Activated T-helper 1 cell treated with anti-CD3 and anti-CD28 coated beads, Interleukin-12 subunit alpha, Interleukin-12 subunit beta, Interleukin-2, Interleukin-4 antibody, amounts not matched to agents 30 ng/mL and 10 ng/mL and 1 ng/mL, durations not matched to agents 14 hours and 24 hours and 36 hours (primary cell): ENCODE measurements at regions of chr4 and their contacts with region 1.

Region 1: GRCh38 chr4:153916273-153916755 is 127.4 kb upstream of the SFRP2 start:
- DNase-seq: no peak
- H3K4me3 Mint-ChIP-seq: no peak overlapping the region
- H3K27ac Mint-ChIP-seq: no peak overlapping the region
- H3K4me1 Mint-ChIP-seq: no peaks in the 10 kb centered on the region
- H3K27me3 Mint-ChIP-seq: peaks cover 14% of the 10 kb centered on the region

Region 2: GRCh38 chr4:153809307-153809706 is 107.0 kb before region 1 on chr4:
- intact Hi-C with region 1: loop called (anchors 1 kb)
- DNase-seq: no peak
- H3K4me3 Mint-ChIP-seq: no peak overlapping the region
- H3K27ac Mint-ChIP-seq: no peak overlapping the region
- H3K4me1 Mint-ChIP-seq: peaks cover 5% of the 10 kb centered on the region
- H3K27me3 Mint-ChIP-seq: peaks cover 3% of the 10 kb centered on the region

Region 3: DNA sequence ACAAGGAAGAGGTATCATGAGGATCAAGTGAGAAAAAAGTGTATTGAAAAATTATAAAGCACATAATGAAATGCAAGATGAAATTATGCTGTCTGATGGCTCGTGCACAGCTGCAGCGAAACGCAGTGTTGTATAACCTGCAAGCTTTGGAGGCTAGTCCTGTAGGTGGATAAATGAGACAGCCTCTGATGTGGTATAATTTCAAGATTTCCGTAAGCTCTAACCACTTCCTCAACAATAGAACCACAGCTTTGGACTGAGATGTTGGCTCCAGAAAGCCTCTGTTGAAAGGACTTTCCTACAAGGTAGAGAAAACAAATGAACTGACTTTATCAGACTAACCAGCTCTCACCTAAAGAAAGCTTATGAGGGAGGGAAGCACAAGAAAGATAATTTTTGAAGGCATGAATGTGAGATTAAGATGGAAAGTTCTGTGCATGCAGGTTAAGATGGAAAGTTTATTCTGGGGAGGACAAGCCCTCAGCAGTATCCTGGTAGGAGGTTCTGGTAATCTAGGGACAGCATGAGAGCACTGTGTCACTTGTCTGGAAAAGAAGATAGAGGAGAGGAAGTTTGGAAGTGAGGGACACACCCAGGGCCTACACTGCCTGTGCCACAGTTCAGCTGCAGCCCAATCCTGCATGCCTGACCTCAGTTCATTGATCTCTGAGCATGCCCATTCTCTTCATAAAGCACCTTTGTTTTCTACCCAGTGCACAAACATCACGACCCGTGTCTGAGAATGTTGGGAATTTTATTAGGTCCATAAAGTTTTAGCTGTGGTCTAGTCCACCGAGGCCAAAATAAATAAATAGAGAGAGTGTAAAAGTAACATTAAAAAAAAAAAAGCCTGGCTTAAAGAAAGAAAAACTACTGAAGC is 34.0 kb after region 1 on chr4:
- intact Hi-C with region 1: loop called (anchors 1 kb)
- DNase-seq: peak; percentile 4
- H3K4me3 Mint-ChIP-seq: no peak overlapping the region
- H3K27ac Mint-ChIP-seq: no peak overlapping the region
- H3K4me1 Mint-ChIP-seq: peaks cover 16% of the 10 kb centered on the region
- H3K27me3 Mint-ChIP-seq: peaks cover 27% of the 10 kb centered on the region

Region 4: GRCh38 chr4:155143512-155143911 is 1227.2 kb after region 1 on chr4:
- intact Hi-C with region 1: no loop called
- DNase-seq: no peak
- H3K4me3 Mint-ChIP-seq: no peak overlapping the region
- H3K27ac Mint-ChIP-seq: no peak overlapping the region
- H3K4me1 Mint-ChIP-seq: no peaks in the 10 kb centered on the region
- H3K27me3 Mint-ChIP-seq: no peaks in the 10 kb centered on the region